Thyroid gland (tissue), 4 donors: ENCODE measurements at regions of chr5 and their contacts with region 1.

Region 1: GRCh38 chr5:65481635-65482295 is at the start of gene ADAMTS6:
- DNase-seq: peak; percentile 92 to 94
- H3K4me3 ChIP-seq: peak within 1 kb of the TSS in 2 of 3 donors; percentile 39 to 64
- H3K27ac ChIP-seq: peak within 1 kb of the TSS; percentile 82 to 93 (median 91)
- H3K4me1 ChIP-seq: peaks cover 12 to 16% of the 10 kb centered on the region in 2 donors
- H3K27me3 ChIP-seq: no peaks in the 10 kb centered on the region
- CTCF ChIP-seq: no peak
- POLR2A ChIP-seq: peak in 1 of 2 donors; percentile 74
- total RNA-seq, gene ADAMTS6: 1.0 to 3.4 (median 3.3) TPM

Region 2: GRCh38 chr5:64807520-64807919 is 674.2 kb before region 1 on chr5:
- intact Hi-C with region 1: loop called (anchors 10 kb)
- DNase-seq: no peak
- H3K4me3 ChIP-seq: no peak overlapping the region
- H3K27ac ChIP-seq: peak overlapping the region in 1 of 3 donors; percentile 39
- H3K4me1 ChIP-seq: no peaks in the 10 kb centered on the region
- H3K27me3 ChIP-seq: no peaks in the 10 kb centered on the region
- CTCF ChIP-seq: no peak
- POLR2A ChIP-seq: no peak

Region 3: DNA sequence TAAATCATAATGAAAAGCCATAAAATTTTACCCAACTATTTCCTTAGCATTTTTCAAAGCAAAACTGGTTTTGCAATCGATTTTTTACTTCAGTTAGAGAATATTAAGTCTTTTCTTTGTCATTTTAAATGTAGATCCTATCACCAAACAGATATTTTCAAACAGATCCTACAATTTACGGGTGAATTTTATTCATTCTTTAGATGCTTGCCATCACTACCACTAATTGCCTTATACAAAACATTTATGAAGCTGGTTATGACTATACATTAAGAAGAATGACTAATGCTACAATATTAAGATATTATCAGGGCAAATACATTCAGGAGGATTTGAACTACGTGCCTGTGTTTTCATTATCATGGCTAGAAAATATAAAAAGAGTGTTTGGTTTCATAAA is 516.2 kb before region 1 on chr5:
- intact Hi-C with region 1: loop called (anchors 10 kb)
- DNase-seq: no peak
- H3K4me3 ChIP-seq: no peak overlapping the region
- H3K27ac ChIP-seq: no peak overlapping the region
- H3K4me1 ChIP-seq: no peaks in the 10 kb centered on the region
- H3K27me3 ChIP-seq: no peaks in the 10 kb centered on the region
- CTCF ChIP-seq: no peak
- POLR2A ChIP-seq: no peak

Region 4: DNA sequence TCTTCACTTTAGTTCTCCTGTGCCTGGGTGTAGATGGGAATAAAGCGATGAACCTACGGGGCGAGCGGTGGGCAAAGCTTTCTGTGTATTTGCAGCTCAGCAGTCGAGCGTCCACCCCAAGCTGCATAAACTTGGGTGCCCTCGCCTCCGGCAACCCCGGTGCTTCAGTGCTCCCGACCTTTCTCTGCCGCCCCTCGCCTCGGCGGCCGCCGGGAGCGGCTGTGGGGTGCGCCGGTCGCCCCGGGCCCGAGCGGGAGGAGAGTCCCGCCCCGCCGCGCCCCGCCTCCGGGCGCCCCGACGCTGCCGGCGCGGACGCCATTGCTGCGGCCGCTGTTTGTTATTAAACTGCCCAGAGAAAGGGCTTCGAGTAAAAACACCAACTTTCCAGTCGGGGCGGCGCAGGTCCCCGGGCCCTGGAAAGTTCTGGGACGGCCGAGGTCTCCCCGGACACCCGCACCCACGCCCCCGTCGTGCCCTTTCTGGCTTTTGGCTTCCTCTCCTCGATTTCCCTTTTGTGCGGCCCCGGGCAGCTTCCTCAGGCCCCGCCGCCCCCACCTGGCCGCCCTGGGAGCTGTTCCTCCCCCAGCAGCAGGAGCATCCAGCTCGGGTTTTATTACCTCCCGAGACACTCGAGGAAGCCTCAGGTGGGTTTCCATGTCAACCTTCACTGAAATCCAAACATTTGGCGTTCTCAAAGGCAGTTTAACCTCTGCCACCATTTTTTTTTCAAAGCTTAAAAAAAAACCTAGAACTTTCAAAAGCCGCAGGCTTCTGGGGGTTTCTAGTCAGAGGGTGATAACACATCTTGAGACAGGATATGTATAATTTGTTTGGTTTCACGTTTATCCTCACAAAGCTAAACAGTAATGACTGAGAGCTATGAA is 378.7 kb before region 1 on chr5:
- intact Hi-C with region 1: loop called (anchors 5 kb)
- DNase-seq: peak; percentile 76 to 82
- H3K4me3 ChIP-seq: peak overlapping the region in 2 of 3 donors; percentile 31 to 39
- H3K27ac ChIP-seq: peak overlapping the region; percentile 78 to 94 (median 85)
- H3K4me1 ChIP-seq: peaks cover 4 to 8% of the 10 kb centered on the region in 2 donors
- H3K27me3 ChIP-seq: no peaks in the 10 kb centered on the region
- CTCF ChIP-seq: peak in 2 of 6 experiments; percentile 15 to 38
- POLR2A ChIP-seq: peak in 1 of 2 donors; percentile 55